H1 (cell line): ENCODE measurements at regions of chr7 and their contacts with region 1.

Region 1: DNA sequence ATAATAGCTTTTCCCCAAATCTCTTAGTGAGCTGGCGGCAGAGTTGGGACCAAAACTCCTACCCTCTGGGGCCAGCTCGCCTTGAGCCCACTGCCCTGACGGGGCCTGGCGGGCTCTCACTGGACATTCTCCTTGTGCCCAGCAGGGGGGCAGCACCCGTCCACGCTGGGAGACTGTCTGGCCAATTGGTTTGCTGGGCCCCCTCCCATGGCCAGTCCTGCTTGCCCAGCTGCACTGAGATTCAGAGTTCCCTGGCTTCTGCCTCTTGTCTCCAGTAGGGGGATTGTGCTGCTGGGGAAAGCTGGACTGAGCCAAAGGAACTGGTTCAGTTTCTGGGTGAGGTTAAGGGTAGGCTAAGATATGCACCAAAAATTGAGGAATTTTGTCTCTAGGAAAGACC is 59.8 kb downstream of the RAMP3 start:
- DNase-seq: no peak
- H3K4me3 ChIP-seq: no peak overlapping the region
- H3K27ac ChIP-seq: no peak overlapping the region
- H3K4me1 ChIP-seq: no peaks in the 10 kb centered on the region; a peak in 1 of 7 replicates
- H3K27me3 ChIP-seq: no peaks in the 10 kb centered on the region
- CTCF ChIP-seq: no peak
- EP300 ChIP-seq: no peak
- POLR2A ChIP-seq: no peak
- RAD21 ChIP-seq: no peak

Region 2: DNA sequence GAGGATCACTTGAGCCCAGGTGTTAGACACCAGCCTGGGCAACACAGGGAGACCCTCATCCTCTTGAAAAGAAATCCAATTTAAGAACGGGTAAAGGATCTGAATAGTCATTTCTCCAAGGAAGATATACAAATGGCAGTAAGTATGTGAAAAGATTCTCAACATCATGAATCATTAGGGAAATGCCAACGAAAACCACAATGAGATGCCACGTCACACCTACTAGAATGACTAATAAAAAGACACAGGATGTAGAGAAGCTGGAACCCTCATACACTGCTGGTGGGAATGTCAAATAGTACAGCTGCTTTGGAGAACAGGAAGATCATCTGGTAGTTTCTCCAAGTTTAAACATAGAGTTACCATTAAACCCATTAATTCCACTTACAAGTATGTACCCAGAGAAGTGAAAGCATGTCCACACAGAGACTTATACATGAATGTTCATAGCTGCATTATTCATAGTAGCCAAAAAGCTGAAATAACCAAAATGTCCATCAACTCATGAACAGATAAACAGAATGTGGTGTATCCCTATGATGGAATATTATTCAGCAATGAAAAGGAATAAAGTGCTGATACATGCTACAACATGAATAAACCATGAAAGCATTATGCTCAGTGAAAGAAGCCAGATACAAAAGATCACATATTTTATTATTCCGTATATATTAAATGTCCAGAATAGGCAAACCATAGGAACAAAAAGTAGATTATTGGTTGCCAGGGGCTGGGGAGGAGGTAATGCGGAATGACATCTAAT is 481.8 kb before region 1 on chr7:
- CTCF ChIA-PET with region 1: no interaction called
- POLR2A ChIA-PET with region 1: no interaction called
- DNase-seq: no peak
- H3K4me3 ChIP-seq: no peak overlapping the region
- H3K27ac ChIP-seq: no peak overlapping the region
- H3K4me1 ChIP-seq: no peaks in the 10 kb centered on the region; a peak in 1 of 7 replicates
- H3K27me3 ChIP-seq: no peaks in the 10 kb centered on the region
- CTCF ChIP-seq: no peak
- EP300 ChIP-seq: no peak
- POLR2A ChIP-seq: no peak
- RAD21 ChIP-seq: no peak

Region 3: DNA sequence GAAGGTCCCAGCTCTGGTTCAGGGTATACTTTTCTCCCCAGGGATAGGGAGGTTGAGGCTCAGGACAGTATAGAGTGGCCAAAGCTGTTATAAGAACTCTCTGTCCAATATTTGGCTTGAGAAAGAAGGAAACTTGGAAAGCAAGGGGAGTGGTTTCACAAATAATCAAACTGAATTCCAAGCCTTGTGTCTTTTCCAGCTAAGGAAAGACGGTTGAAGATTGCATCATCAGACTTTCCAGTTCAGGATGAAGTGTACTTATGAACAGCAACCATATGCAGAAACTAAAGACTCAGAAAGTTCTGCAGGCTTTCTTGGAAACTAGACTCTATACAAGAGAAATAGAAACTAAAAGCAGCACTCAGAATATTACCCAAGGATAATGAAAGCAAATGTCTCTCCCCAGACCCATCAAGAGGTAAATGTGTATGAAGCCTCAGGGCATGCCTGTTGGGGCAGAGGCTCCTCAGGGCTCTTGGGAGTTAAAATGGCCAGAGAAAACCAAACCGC is 13.4 kb before region 1 on chr7:
- CTCF ChIA-PET with region 1: interaction called, 29 read pairs
- POLR2A ChIA-PET with region 1: interaction called, 3 read pairs
- DNase-seq: no peak
- H3K4me3 ChIP-seq: no peak overlapping the region
- H3K27ac ChIP-seq: no peak overlapping the region
- H3K4me1 ChIP-seq: no peaks in the 10 kb centered on the region
- H3K27me3 ChIP-seq: no peaks in the 10 kb centered on the region
- CTCF ChIP-seq: no peak
- EP300 ChIP-seq: no peak
- POLR2A ChIP-seq: no peak
- RAD21 ChIP-seq: no peak